Activated CD4-positive, alpha-beta T cell treated with anti-CD3 and anti-CD28 coated beads for 36 hours (primary cell): ENCODE measurements at regions of chr9 and their contacts with region 1.

Region 1: DNA sequence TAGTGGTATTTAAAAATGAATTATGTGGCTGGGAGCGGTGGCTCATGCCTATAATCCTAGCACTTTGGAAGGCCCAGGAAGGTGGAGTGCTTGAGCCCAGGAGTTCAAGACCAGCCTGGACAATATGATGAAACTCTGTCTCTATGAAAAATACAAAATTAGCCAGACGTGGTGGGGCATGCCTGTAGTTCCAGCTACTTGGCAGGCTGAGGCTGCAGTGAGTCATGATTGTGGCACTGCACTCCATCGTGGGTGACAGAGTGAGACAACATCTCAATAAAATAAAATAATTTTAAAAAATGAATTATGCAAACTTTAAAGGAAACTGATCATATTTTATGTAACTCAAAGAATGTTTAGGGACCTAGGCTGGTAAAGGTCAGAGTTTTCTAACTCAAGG is 310.8 kb upstream of the DMRT1 start:
- DNase-seq: no peak
- ATAC-seq: no peak
- H3K4me3 Mint-ChIP-seq: no peak overlapping the region
- H3K27ac Mint-ChIP-seq: no peak overlapping the region
- H3K4me1 Mint-ChIP-seq: no peaks in the 10 kb centered on the region
- H3K27me3 Mint-ChIP-seq: peaks cover 4% of the 10 kb centered on the region

Region 2: GRCh38 chr9:512555-513272 is 18.0 kb before region 1 on chr9:
- CTCF ChIA-PET with region 1: interaction called, 4 read pairs
- POLR2A ChIA-PET with region 1: no interaction called
- intact Hi-C with region 1: loop called (anchors 1 kb)
- DNase-seq: no peak
- ATAC-seq: no peak
- H3K4me3 Mint-ChIP-seq: no peak overlapping the region
- H3K27ac Mint-ChIP-seq: no peak overlapping the region
- H3K4me1 Mint-ChIP-seq: peaks cover 11% of the 10 kb centered on the region
- H3K27me3 Mint-ChIP-seq: no peaks in the 10 kb centered on the region